Head of caudate nucleus (tissue), 42 donors: ENCODE measurements at regions of chr6 and their contacts with region 1.

Region 1: GRCh38 chr6:158605266-158605878 is 39.2 kb downstream of the DYNLT1 start:
- DNase-seq: peak in 41 of 42 donors; percentile 31 to 91 (median 76)

Region 2: DNA sequence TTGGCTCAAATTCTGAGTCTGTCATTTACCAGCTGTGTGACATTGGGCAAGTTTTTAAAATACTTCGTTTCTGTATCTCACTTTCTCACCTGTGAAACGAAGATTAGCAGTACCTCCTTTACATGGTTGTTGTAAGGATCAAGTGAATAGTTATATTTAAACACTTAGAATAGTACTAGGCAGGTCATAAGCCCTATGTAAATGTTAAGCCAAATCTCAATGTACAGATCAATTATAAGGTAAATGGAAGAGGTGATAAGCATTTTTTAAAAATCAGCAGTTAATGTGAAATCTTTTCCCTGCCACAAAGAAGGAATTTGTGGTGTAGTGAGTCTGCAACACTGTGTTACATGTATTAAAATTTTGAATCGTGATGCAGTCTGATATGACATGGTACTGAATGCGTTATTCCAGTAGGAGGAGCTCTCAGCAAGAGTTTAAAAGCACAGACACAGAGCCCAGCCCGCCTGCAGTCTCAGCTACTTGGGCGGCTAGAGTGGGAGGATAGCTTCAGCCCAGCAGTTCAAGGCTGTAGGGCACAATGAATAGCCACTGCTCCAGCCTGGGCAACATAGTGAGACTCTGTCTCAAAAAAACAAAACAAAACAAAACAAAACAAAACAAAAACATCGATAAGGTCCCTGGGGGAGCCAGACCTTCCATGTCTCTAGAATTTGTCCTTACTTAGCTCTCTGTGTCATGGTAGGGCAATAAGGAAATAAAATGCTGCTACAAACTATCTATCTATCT is 391.3 kb before region 1 on chr6:
- intact Hi-C with region 1: loop called (anchors 10 kb)
- DNase-seq: peak; percentile 41 to 86 (median 70)

Region 3: DNA sequence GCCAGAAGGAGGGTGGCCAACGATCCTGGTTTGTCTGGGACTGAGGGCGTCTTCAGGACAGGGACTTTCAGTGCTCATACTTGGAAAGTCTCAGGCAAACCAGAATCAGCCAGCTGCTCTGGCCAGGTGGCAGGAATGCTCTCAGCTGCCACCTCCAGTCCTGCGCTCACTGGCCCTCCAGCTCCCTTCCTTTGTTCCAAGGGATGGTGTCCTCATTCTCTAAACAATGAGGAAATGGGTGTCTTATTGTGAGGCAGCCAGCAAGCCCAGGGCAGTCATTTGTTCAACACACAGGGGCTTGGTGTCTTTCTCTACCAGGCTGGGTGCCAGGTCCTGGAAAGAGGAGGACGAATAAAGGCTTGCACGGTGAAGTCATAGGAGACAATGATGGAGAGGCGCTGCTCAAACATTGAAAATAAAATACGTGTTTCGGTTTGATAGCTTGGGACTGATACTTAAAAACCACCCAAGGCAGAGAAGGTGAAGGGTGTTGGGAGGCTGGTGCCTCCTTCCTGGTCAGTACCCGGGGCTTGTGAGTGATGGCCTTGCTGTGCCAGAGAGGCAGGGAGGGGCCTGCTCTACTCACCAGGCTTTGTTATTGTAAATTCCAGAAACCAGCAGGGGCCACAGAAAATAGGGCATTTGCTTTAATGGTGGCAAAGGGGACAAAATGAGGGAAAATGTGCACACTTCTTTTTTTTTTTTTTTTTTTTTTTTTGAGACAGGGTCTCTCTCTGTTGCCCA is 56.8 kb before region 1 on chr6:
- intact Hi-C with region 1: loop called (anchors 10 kb)
- DNase-seq: peak in 3 of 42 donors; percentile 10 to 36 (median 31)